ENCODE measurements at regions of chr20 and their contacts with region 1.

Region 1: GRCh38 chr20:14337400-14338171 is at the start of gene FLRT3:
- DNase-seq: peak; percentile 84 to 97
- ATAC-seq: peak; percentile 98 to 99
- H3K4me3 ChIP-seq: peak within 1 kb of the TSS; percentile 67
- H3K27ac ChIP-seq: peak within 1 kb of the TSS; percentile 73 to 76
- H3K4me1 ChIP-seq: peaks cover 31% of the 10 kb centered on the region
- CTCF ChIP-seq: peak; percentile 94
- EP300 ChIP-seq: no peak
- POLR2A ChIP-seq: peak; percentile 97
- RAD21 ChIP-seq: peak; percentile 98 to 99
- polyA plus RNA-seq, gene FLRT3: 28.7 and 35.1 TPM in 2 replicates

Region 2: GRCh38 chr20:14093652-14094051 is 243.9 kb before region 1 on chr20:
- CTCF ChIA-PET with region 1: no interaction called
- POLR2A ChIA-PET with region 1: no interaction called
- DNase-seq: no peak
- ATAC-seq: no peak
- H3K4me3 ChIP-seq: no peak overlapping the region
- H3K27ac ChIP-seq: no peak overlapping the region
- H3K4me1 ChIP-seq: no peaks in the 10 kb centered on the region
- CTCF ChIP-seq: no peak
- EP300 ChIP-seq: no peak
- POLR2A ChIP-seq: no peak
- RAD21 ChIP-seq: no peak

Region 3: GRCh38 chr20:14406495-14406894 is 68.9 kb after region 1 on chr20:
- CTCF ChIA-PET with region 1: interaction called, 16 read pairs
- POLR2A ChIA-PET with region 1: interaction called, 4 read pairs
- DNase-seq: peak; percentile 81 to 96
- ATAC-seq: peak; percentile 98
- H3K4me3 ChIP-seq: no peak overlapping the region; the same call in 2 of the 3 replicates
- H3K27ac ChIP-seq: peak overlapping the region; percentile 73 to 81
- H3K4me1 ChIP-seq: peaks cover 25% of the 10 kb centered on the region
- CTCF ChIP-seq: no peak
- EP300 ChIP-seq: peak; percentile 93 to 95
- POLR2A ChIP-seq: no peak
- RAD21 ChIP-seq: peak; percentile 60 to 82

Measured in A549 (cell line).